CD8-positive, alpha-beta memory T cell (primary cell): ENCODE measurements at regions of chr15 and their contacts with region 1.

Region 1: GRCh38 chr15:66459818-66460615 is 37.5 kb downstream of the SNAPC5 start:
- DNase-seq: no peak
- H3K4me3 ChIP-seq: no peak overlapping the region
- H3K4me3 Mint-ChIP-seq: no peak overlapping the region
- H3K27ac ChIP-seq: no peak overlapping the region
- H3K27ac Mint-ChIP-seq: peak overlapping the region in 7 of 8 donors; percentile 4 to 84 (median 64)
- H3K4me1 ChIP-seq: peaks cover 7% of the 10 kb centered on the region
- H3K4me1 Mint-ChIP-seq: peaks cover 10 to 14% (median 11%) of the 10 kb centered on the region in 3 donors
- H3K27me3 ChIP-seq: no peaks in the 10 kb centered on the region
- H3K27me3 Mint-ChIP-seq: no peaks in the 10 kb centered on the region

Region 2: GRCh38 chr15:65494071-65494470 is 965.9 kb before region 1 on chr15:
- CTCF ChIA-PET with region 1: no interaction called
- POLR2A ChIA-PET with region 1: interaction called, 14 read pairs
- DNase-seq: no peak
- H3K4me3 ChIP-seq: no peak overlapping the region
- H3K4me3 Mint-ChIP-seq: no peak overlapping the region
- H3K27ac ChIP-seq: no peak overlapping the region
- H3K27ac Mint-ChIP-seq: peak overlapping the region in 2 of 8 donors; percentile 24 to 73
- H3K4me1 ChIP-seq: no peaks in the 10 kb centered on the region
- H3K4me1 Mint-ChIP-seq: peaks cover 10 to 34% (median 10%) of the 10 kb centered on the region in 3 donors
- H3K27me3 ChIP-seq: no peaks in the 10 kb centered on the region
- H3K27me3 Mint-ChIP-seq: no peaks in the 10 kb centered on the region